ENCODE measurements at regions of chr1 and their contacts with region 1.

Region 1: GRCh38 chr1:109263597-109264398 is 14.5 kb downstream of the CELSR2 start:
- DNase-seq: peak; percentile 84
- H3K4me3 Mint-ChIP-seq: no peak overlapping the region
- H3K27ac Mint-ChIP-seq: no peak overlapping the region
- H3K4me1 Mint-ChIP-seq: peaks cover 3% of the 10 kb centered on the region
- H3K27me3 Mint-ChIP-seq: peaks cover 1% of the 10 kb centered on the region

Region 2: DNA sequence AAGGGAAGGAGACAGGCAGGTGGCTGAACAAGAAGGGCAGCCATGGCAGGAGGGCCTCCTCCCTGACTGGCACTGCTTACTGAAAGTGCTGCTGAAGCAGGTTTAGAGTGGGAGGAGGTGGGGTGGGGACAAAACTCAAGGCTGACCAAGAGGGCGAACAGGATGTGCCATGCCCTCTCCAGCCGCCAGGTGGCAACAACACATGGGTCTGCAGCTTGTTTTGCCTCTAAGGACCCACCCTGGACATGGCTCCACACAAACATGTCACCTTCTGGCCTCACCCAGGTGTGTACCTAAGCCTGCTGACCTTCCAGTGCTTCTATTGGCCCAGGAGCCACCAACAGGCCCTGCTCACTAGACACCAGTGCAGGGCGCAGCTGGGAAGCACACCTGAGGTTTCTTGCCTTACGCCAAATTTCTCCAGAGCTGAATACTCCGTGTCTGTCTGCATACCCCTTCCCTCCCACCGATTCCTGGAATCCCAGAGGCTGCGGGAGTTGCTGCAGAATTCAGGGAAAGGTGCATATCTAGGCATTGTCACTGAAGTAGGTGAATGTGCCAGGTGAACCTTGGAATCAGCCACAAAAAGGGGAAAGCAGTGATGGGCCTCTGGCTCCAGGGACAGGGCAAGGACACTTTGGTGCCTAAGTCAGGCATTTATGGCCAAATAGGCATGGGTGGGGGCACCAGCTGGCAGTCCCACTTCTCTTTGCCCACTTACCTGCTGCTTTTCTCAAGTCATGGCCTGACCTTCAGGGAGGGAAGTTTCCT is 13.8 kb after region 1 on chr1:
- CTCF ChIA-PET with region 1: interaction called, 28 read pairs
- intact Hi-C with region 1: no loop called
- DNase-seq: peak; percentile 73
- H3K4me3 Mint-ChIP-seq: no peak overlapping the region
- H3K27ac Mint-ChIP-seq: no peak overlapping the region
- H3K4me1 Mint-ChIP-seq: peaks cover 4% of the 10 kb centered on the region
- H3K27me3 Mint-ChIP-seq: no peaks in the 10 kb centered on the region

Region 3: GRCh38 chr1:109379422-109379821 is 115.6 kb after region 1 on chr1:
- CTCF ChIA-PET with region 1: no interaction called
- intact Hi-C with region 1: no loop called
- DNase-seq: no peak
- H3K4me3 Mint-ChIP-seq: no peak overlapping the region
- H3K27ac Mint-ChIP-seq: no peak overlapping the region
- H3K4me1 Mint-ChIP-seq: peaks cover 5% of the 10 kb centered on the region
- H3K27me3 Mint-ChIP-seq: no peaks in the 10 kb centered on the region

Measured in activated naive CD4-positive, alpha-beta T cell treated with anti-CD3 and anti-CD28 coated beads for 36 hours (primary cell).